ENCODE measurements at regions of chr11 and their contacts with region 1.

Region 1: GRCh38 chr11:33015621-33016551 is at the start of gene DEPDC7:
- DNase-seq: peak; percentile 89
- ATAC-seq: peak; percentile 91
- H3K4me3 ChIP-seq: peak within 1 kb of the TSS; percentile 73 to 79 (median 75)
- H3K27ac ChIP-seq: peak within 1 kb of the TSS; percentile 86
- H3K4me1 ChIP-seq: peaks cover 73% of the 10 kb centered on the region
- H3K27me3 ChIP-seq: no peaks in the 10 kb centered on the region
- CTCF ChIP-seq: no peak; the same call in 1 of the 2 replicates
- EP300 ChIP-seq: no peak; a peak in 1 of 4 replicates
- POLR2A ChIP-seq: peak; percentile 81 to 92
- RAD21 ChIP-seq: peak; percentile 44
- total RNA-seq, gene DEPDC7: 33.3 and 37.9 TPM in 2 replicates

Region 2: DNA sequence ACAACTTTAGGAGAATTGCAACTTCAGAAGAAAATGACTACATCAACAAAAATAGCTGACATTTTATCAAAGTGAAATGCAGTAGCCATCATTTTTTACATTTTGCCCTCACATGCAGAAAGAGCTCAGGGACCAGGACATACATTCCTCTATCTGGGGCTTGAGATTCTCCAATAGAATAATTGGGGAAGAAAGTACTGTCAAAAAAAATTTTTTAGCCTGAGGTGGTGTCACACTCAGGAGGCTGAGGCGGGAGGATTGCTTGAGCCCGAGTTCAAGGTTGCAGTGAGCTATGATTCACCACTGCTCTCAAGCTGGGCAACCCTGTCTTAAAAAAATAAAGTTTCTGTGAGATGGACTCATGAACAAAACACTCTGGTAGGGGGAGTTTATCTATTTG is 32.4 kb before region 1 on chr11:
- CTCF ChIA-PET with region 1: no interaction called
- POLR2A ChIA-PET with region 1: interaction called, 3 read pairs
- in situ Hi-C with region 1: no loop called
- intact Hi-C with region 1: loop called (anchors 5 kb)
- DNase-seq: no peak
- ATAC-seq: no peak
- H3K4me3 ChIP-seq: no peak overlapping the region
- H3K27ac ChIP-seq: no peak overlapping the region
- H3K4me1 ChIP-seq: no peaks in the 10 kb centered on the region
- H3K27me3 ChIP-seq: no peaks in the 10 kb centered on the region
- CTCF ChIP-seq: no peak
- EP300 ChIP-seq: no peak
- POLR2A ChIP-seq: no peak
- RAD21 ChIP-seq: no peak

Region 3: DNA sequence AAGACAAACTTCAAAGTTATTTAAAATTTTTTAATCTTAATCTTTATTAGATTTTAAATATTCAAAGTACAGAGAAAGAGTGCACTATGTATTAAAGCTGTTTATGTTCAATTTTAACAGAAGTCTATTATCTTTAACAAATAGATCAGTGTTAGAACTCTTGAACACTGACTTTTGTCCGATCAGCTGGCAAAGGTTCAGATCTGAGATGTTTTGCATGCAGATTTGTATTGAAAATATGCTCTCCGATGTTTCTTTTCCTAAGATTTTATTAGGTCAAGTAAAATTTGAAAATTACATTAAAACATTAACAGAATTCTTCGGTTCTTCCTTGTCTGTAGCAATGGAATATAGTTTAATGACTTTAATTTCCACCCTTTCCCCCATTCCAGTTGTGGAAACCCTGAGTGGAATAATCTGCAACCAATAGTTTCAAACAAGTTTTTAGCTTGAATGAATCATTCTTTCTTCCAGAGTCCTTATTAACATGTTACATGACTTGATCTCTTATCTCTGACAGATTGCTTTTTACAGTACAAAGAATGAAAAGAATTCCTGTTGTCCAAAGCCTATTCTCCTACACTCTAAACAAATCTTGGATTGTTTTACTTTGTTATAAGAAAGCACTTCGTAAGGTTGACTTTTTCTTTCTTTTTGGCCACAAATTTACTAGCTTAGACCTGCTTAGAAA is 12.1 kb after region 1 on chr11:
- CTCF ChIA-PET with region 1: no interaction called
- POLR2A ChIA-PET with region 1: interaction called, 19 read pairs
- in situ Hi-C with region 1: no loop called
- intact Hi-C with region 1: no loop called
- DNase-seq: no peak
- ATAC-seq: no peak
- H3K4me3 ChIP-seq: no peak overlapping the region
- H3K27ac ChIP-seq: no peak overlapping the region
- H3K4me1 ChIP-seq: peaks cover 8% of the 10 kb centered on the region; the same call in 1 of the 2 replicates
- H3K27me3 ChIP-seq: no peaks in the 10 kb centered on the region; a peak in 1 of 5 replicates
- CTCF ChIP-seq: no peak
- EP300 ChIP-seq: no peak
- POLR2A ChIP-seq: no peak
- RAD21 ChIP-seq: no peak

Region 4: GRCh38 chr11:33060271-33060670 is 44.4 kb after region 1 on chr11:
- CTCF ChIA-PET with region 1: no interaction called
- POLR2A ChIA-PET with region 1: interaction called, 19 read pairs
- in situ Hi-C with region 1: no loop called
- intact Hi-C with region 1: no loop called
- DNase-seq: no peak
- ATAC-seq: peak; percentile 19; the same call in 1 of the 3 replicates
- H3K4me3 ChIP-seq: no peak overlapping the region
- H3K27ac ChIP-seq: no peak overlapping the region
- H3K4me1 ChIP-seq: peaks cover 22% of the 10 kb centered on the region
- H3K27me3 ChIP-seq: no peaks in the 10 kb centered on the region
- CTCF ChIP-seq: no peak
- EP300 ChIP-seq: no peak
- POLR2A ChIP-seq: no peak
- RAD21 ChIP-seq: no peak

Region 5: DNA sequence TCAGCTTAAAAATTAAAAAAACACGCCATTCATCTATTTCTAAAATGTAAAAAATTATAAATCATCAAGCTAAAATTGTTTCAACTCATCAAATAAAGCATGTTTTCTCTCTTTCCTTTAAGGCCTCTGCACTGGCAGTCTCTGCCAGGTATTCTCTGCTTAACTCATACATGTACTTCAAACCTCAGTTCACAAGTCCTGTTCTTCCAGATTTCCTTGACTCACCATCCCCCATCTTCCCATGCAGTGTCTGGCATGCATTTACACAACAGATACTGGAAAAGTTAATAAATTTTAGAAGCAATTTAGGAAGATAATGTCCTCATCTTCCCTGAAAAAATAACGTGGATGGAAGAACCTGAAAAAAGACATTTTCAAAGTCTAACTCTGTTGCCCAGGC is 112.9 kb after region 1 on chr11:
- CTCF ChIA-PET with region 1: no interaction called
- POLR2A ChIA-PET with region 1: no interaction called
- in situ Hi-C with region 1: no loop called
- intact Hi-C with region 1: no loop called
- DNase-seq: no peak
- ATAC-seq: no peak
- H3K4me3 ChIP-seq: no peak overlapping the region
- H3K27ac ChIP-seq: no peak overlapping the region
- H3K4me1 ChIP-seq: no peaks in the 10 kb centered on the region
- H3K27me3 ChIP-seq: no peaks in the 10 kb centered on the region
- CTCF ChIP-seq: no peak
- EP300 ChIP-seq: no peak
- POLR2A ChIP-seq: no peak
- RAD21 ChIP-seq: no peak